Activated B cell treated with CpG ODN at 0.5 μM for 24 hours (primary cell): ENCODE measurements at regions of chr1 and their contacts with region 1.

Region 1: GRCh38 chr1:105467549-105467948 is 1588.9 kb upstream of the PRMT6 start:
- DNase-seq: no peak
- ATAC-seq: no peak
- H3K4me3 Mint-ChIP-seq: no peak overlapping the region
- H3K27ac Mint-ChIP-seq: no peak overlapping the region
- H3K4me1 Mint-ChIP-seq: no peaks in the 10 kb centered on the region
- H3K27me3 Mint-ChIP-seq: no peaks in the 10 kb centered on the region
- CTCF ChIP-seq: no peak

Region 2: GRCh38 chr1:105294838-105295237 is 172.7 kb before region 1 on chr1:
- CTCF ChIA-PET with region 1: no interaction called
- POLR2A ChIA-PET with region 1: no interaction called
- intact Hi-C with region 1: no loop called
- DNase-seq: no peak
- ATAC-seq: no peak
- H3K4me3 Mint-ChIP-seq: no peak overlapping the region
- H3K27ac Mint-ChIP-seq: no peak overlapping the region
- H3K4me1 Mint-ChIP-seq: no peaks in the 10 kb centered on the region
- H3K27me3 Mint-ChIP-seq: no peaks in the 10 kb centered on the region
- CTCF ChIP-seq: no peak

Region 3: GRCh38 chr1:105442901-105443300 is 24.6 kb before region 1 on chr1:
- CTCF ChIA-PET with region 1: no interaction called
- POLR2A ChIA-PET with region 1: no interaction called
- intact Hi-C with region 1: no loop called
- DNase-seq: no peak
- ATAC-seq: no peak
- H3K4me3 Mint-ChIP-seq: no peak overlapping the region
- H3K27ac Mint-ChIP-seq: no peak overlapping the region
- H3K4me1 Mint-ChIP-seq: no peaks in the 10 kb centered on the region
- H3K27me3 Mint-ChIP-seq: no peaks in the 10 kb centered on the region
- CTCF ChIP-seq: no peak

Region 4: GRCh38 chr1:105485207-105485606 is 17.7 kb after region 1 on chr1:
- CTCF ChIA-PET with region 1: no interaction called
- POLR2A ChIA-PET with region 1: no interaction called
- intact Hi-C with region 1: loop called (anchors 1 kb)
- DNase-seq: no peak
- ATAC-seq: no peak
- H3K4me3 Mint-ChIP-seq: no peak overlapping the region
- H3K27ac Mint-ChIP-seq: no peak overlapping the region
- H3K4me1 Mint-ChIP-seq: no peaks in the 10 kb centered on the region
- H3K27me3 Mint-ChIP-seq: no peaks in the 10 kb centered on the region
- CTCF ChIP-seq: no peak

Region 5: DNA sequence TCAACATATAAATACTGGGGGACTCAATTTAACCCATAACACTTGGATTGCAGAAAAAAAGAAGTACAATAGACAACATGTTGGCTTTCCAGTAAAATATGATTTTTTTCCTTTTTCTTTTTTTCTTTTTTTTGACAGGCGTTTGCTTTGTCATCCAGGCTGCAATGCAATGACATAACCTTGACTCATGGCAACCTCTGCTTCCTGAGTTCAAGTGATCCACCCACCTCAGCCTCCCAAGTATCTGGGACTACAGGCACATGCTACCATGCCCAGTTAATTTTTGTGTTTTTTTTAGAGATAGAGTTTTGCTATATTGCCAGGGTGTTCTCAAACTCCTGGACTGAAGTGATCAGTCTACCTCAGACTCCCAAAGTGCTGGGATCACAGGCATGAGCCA is 76.9 kb after region 1 on chr1:
- CTCF ChIA-PET with region 1: no interaction called
- POLR2A ChIA-PET with region 1: no interaction called
- intact Hi-C with region 1: no loop called
- DNase-seq: no peak
- ATAC-seq: no peak
- H3K4me3 Mint-ChIP-seq: no peak overlapping the region
- H3K27ac Mint-ChIP-seq: no peak overlapping the region
- H3K4me1 Mint-ChIP-seq: no peaks in the 10 kb centered on the region
- H3K27me3 Mint-ChIP-seq: no peaks in the 10 kb centered on the region
- CTCF ChIP-seq: no peak